ENCODE measurements at regions of chr19 and their contacts with region 1.

Region 1: DNA sequence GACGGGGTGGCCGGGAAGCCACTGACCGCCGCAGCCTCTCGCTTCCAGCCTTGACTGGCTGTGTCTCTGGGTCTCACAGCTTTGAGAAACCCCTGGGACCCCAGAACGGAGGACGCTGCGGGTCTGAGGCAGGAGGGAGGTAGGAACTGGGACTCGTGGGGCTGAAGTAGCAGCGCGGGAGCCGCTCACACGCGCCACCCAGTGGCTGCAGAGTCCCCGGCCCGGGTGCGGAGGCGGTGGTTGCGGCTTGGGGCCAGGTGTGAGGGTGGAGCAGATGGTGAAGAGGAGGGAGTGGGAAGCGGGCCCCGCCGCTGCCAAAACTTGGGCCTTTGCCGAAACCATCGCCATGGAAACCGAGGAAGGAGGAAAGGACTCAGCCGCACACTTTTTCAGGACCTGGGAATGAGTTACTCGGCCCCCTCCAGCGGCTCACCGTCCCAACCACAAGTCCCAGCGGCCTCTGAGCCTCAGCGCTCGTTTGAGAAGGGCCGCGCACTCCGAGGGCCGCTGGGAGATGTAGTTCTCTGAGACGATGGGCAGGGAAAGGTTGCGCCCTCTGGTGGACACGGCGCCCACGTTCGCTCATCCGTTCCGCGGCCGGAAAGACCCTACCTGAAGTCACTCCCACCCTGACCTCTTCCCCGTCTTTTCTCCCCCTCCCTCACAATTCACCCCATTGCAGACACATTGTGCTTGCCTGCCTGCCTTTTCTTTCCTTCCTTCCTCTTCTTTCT is 2.2 kb upstream of the SLC17A7 start:
- DNase-seq: peak; percentile 90 to 98 (median 95)
- ATAC-seq: peak; percentile 96
- H3K4me3 ChIP-seq: peak overlapping the region; percentile 57
- H3K4me3 Mint-ChIP-seq: peak overlapping the region; percentile 75 to 88 (median 83)
- H3K27ac ChIP-seq: peak overlapping the region; percentile 51
- H3K27ac Mint-ChIP-seq: peak overlapping the region; percentile 59 to 91 (median 83)
- H3K4me1 ChIP-seq: peaks cover 12 to 15% of the 10 kb centered on the region in 2 donors
- H3K4me1 Mint-ChIP-seq: peaks cover 29 to 54% (median 37%) of the 10 kb centered on the region in 7 donors
- H3K27me3 ChIP-seq: peaks cover 23 to 32% of the 10 kb centered on the region in 2 donors
- H3K27me3 Mint-ChIP-seq: peaks cover 36 to 48% (median 39%) of the 10 kb centered on the region in 5 donors

Region 2: GRCh38 chr19:49224856-49225255 is 218.7 kb before region 1 on chr19:
- CTCF ChIA-PET with region 1: interaction called, 4 read pairs
- POLR2A ChIA-PET with region 1: no interaction called
- intact Hi-C with region 1: loop called (anchors 1 to 10 kb)
- DNase-seq: peak in 3 of 9 donors; percentile 15 to 33 (median 24)
- ATAC-seq: peak; percentile 56
- H3K4me3 ChIP-seq: no peak overlapping the region
- H3K4me3 Mint-ChIP-seq: no peak overlapping the region
- H3K27ac ChIP-seq: no peak overlapping the region
- H3K27ac Mint-ChIP-seq: no peak overlapping the region
- H3K4me1 ChIP-seq: peaks cover 4 to 9% of the 10 kb centered on the region in 2 donors
- H3K4me1 Mint-ChIP-seq: peaks cover 5 to 7% (median 6%) of the 10 kb centered on the region in 7 donors
- H3K27me3 ChIP-seq: no peaks in the 10 kb centered on the region
- H3K27me3 Mint-ChIP-seq: peaks cover 2 to 6% (median 4%) of the 10 kb centered on the region in 5 donors

Region 3: DNA sequence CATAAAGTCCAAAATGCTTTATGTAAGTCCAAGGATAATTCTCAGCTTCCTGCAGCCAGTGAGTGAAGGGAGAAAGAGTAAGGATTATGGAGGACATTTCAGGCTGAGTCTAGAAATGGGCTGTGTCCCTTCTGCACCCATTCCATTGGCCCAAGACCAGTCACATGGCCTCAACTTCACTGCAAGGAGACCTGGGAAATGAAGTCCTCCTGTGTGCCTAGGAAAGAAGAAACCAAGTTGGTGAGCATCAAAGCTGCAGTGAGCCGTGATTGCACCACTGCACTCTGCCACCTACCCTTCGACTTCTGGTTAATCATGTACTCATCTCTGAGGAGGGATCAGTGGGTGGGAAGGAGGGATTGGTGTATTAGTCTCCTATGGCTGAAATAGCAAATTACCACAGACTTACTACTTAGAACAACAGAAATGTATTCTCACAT is 111.9 kb before region 1 on chr19:
- CTCF ChIA-PET with region 1: no interaction called
- POLR2A ChIA-PET with region 1: no interaction called
- intact Hi-C with region 1: loop called (anchors 2 kb)
- DNase-seq: peak in 8 of 9 donors; percentile 48 to 76 (median 65)
- ATAC-seq: peak; percentile 83
- H3K4me3 ChIP-seq: no peak overlapping the region
- H3K4me3 Mint-ChIP-seq: peak overlapping the region in 9 of 10 donors; percentile 14 to 99 (median 49)
- H3K27ac ChIP-seq: peak overlapping the region; percentile 4
- H3K27ac Mint-ChIP-seq: peak overlapping the region; percentile 54 to 99 (median 87)
- H3K4me1 ChIP-seq: peaks cover 37 to 44% of the 10 kb centered on the region in 2 donors
- H3K4me1 Mint-ChIP-seq: peaks cover 54 to 80% (median 70%) of the 10 kb centered on the region in 7 donors
- H3K27me3 ChIP-seq: no peaks in the 10 kb centered on the region
- H3K27me3 Mint-ChIP-seq: no peaks in the 10 kb centered on the region

Region 4: GRCh38 chr19:49409441-49410029 is 34.0 kb before region 1 on chr19:
- CTCF ChIA-PET with region 1: interaction called, 6 read pairs
- POLR2A ChIA-PET with region 1: interaction called, 3 read pairs
- intact Hi-C with region 1: loop called in 1 of 2 experiments (anchors 5 kb)
- DNase-seq: peak in 1 of 9 donors; percentile 24
- ATAC-seq: peak; percentile 66
- H3K4me3 ChIP-seq: peak overlapping the region; percentile 1
- H3K4me3 Mint-ChIP-seq: peak overlapping the region; percentile 34 to 86 (median 68)
- H3K27ac ChIP-seq: peak overlapping the region; percentile 6
- H3K27ac Mint-ChIP-seq: peak overlapping the region; percentile 77 to 91 (median 84)
- H3K4me1 ChIP-seq: peaks cover 16 to 39% of the 10 kb centered on the region in 2 donors
- H3K4me1 Mint-ChIP-seq: peaks cover 43 to 72% (median 56%) of the 10 kb centered on the region in 7 donors
- H3K27me3 ChIP-seq: no peaks in the 10 kb centered on the region
- H3K27me3 Mint-ChIP-seq: peaks cover 0 to 4% (median 0%) of the 10 kb centered on the region in 5 donors

Region 5: GRCh38 chr19:49468746-49469447 is 25.4 kb after region 1 on chr19:
- CTCF ChIA-PET with region 1: interaction called, 83 read pairs
- POLR2A ChIA-PET with region 1: interaction called, 226 read pairs
- intact Hi-C with region 1: loop called (anchors 1 kb)
- DNase-seq: peak; percentile 59 to 98 (median 95)
- ATAC-seq: peak; percentile 87
- H3K4me3 ChIP-seq: peak overlapping the region; percentile 10
- H3K4me3 Mint-ChIP-seq: peak overlapping the region; percentile 73 to 91 (median 81)
- H3K27ac ChIP-seq: peak overlapping the region; percentile 97
- H3K27ac Mint-ChIP-seq: peak overlapping the region; percentile 94 to 100 (median 100)
- H3K4me1 ChIP-seq: peaks cover 55 to 59% of the 10 kb centered on the region in 2 donors
- H3K4me1 Mint-ChIP-seq: peaks cover 23 to 56% (median 40%) of the 10 kb centered on the region in 7 donors
- H3K27me3 ChIP-seq: no peaks in the 10 kb centered on the region
- H3K27me3 Mint-ChIP-seq: no peaks in the 10 kb centered on the region

Region 6: GRCh38 chr19:49570138-49570856 is 126.8 kb after region 1 on chr19:
- CTCF ChIA-PET with region 1: interaction called, 4 read pairs
- POLR2A ChIA-PET with region 1: no interaction called
- intact Hi-C with region 1: loop called in 1 of 2 experiments (anchors 1 kb)
- DNase-seq: peak in 7 of 9 donors; percentile 75 to 88 (median 83)
- ATAC-seq: peak; percentile 64
- H3K4me3 ChIP-seq: no peak overlapping the region
- H3K4me3 Mint-ChIP-seq: peak overlapping the region; percentile 64 to 80 (median 75)
- H3K27ac ChIP-seq: peak overlapping the region; percentile 56
- H3K27ac Mint-ChIP-seq: peak overlapping the region; percentile 86 to 99 (median 93)
- H3K4me1 ChIP-seq: peaks cover 37 to 53% of the 10 kb centered on the region in 2 donors
- H3K4me1 Mint-ChIP-seq: peaks cover 34 to 70% (median 61%) of the 10 kb centered on the region in 7 donors
- H3K27me3 ChIP-seq: no peaks in the 10 kb centered on the region
- H3K27me3 Mint-ChIP-seq: peaks cover 0 to 2% (median 0%) of the 10 kb centered on the region in 5 donors

Region 7: DNA sequence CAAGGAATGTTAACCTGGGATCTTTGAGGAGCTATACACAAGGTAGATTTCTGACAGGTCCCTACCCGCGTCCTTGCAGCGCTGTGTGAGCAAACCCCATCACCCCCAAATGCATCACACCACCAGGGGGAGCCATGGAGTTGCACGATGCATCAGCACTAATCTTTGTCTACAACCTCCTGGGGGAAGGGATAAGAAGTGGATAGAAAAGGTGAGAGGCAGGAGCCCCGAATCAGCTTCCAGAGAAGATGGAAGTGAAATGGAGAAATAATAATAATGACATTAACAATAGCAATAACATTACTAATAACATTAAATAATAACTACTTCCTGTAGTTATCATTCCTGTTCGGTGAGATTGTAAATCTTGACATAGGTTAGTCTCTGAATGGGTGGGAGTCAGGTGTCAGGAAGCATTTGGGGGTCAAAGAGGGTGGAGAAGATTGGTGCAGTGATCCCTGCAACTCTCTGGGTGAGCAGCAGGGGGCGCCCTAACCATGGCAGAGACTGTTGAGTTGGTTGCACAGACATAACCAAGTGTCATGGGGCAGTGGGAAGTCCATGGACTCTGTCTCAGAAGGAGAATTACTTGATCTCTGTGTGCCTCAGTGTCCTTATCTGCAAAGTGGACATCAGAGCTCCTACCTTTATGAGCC is 1715.1 kb after region 1 on chr19:
- CTCF ChIA-PET with region 1: no interaction called
- POLR2A ChIA-PET with region 1: no interaction called
- intact Hi-C with region 1: no loop called
- DNase-seq: peak; percentile 21 to 82 (median 56)
- ATAC-seq: peak; percentile 89
- H3K4me3 ChIP-seq: no peak overlapping the region
- H3K4me3 Mint-ChIP-seq: no peak overlapping the region
- H3K27ac ChIP-seq: no peak overlapping the region
- H3K27ac Mint-ChIP-seq: peak overlapping the region in 1 of 9 donors; percentile 56
- H3K4me1 ChIP-seq: peaks cover 0 to 4% of the 10 kb centered on the region in 2 donors
- H3K4me1 Mint-ChIP-seq: peaks cover 0 to 24% (median 11%) of the 10 kb centered on the region in 7 donors
- H3K27me3 ChIP-seq: no peaks in the 10 kb centered on the region
- H3K27me3 Mint-ChIP-seq: peaks cover 0 to 24% (median 0%) of the 10 kb centered on the region in 5 donors

Measured in naive thymus-derived CD4-positive, alpha-beta T cell (primary cell).